ENCODE measurements at regions of chr17 and their contacts with region 1.

Region 1: DNA sequence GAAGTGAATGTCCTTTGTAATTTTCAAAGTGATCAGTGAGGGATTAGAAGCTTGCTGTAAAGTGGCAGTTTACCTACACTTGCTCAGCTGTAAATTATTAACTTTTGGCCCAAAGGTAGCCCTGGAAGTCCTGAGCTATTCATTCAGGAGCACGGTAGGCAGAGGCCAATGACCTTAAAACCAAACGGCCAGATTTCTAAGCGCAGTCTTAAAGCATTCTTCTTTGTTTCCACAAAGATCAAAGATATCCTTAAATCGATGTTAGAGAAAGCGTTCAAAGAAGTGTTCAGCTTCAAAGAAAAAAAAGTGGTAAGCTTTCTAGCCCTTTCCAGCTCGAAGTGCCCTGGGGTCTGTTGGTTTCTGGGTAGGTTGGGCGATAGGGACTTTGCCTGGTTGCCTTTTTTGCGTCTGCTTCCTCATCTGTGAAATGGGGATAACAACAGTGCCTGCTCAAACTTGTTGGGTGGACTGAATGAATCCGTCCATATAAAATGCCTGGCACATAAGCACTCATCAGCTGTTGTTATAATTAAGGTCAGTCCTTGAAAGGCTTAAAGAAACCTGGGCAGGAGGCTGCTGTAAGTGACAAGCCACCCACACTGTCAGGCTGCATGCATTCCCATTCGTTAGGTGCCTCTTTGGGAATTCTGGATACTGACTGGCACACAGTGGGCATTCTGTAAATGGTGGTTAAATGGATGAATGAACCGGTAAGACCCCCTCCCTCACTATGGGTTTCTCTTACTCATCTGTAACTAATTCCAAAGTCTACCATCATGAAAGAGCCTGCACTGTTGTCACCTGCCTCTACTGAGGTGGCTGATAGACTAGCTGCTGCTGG is 113.2 kb downstream of the PRKCA start:
- DNase-seq: no peak
- H3K4me3 ChIP-seq: no peak overlapping the region
- H3K27ac ChIP-seq: peak overlapping the region; percentile 54 to 77 (median 69)
- H3K4me1 ChIP-seq: peaks cover 11 to 44% (median 27%) of the 10 kb centered on the region in 4 donors
- H3K27me3 ChIP-seq: no peaks in the 10 kb centered on the region
- CTCF ChIP-seq: no peak
- EP300 ChIP-seq: no peak
- POLR2A ChIP-seq: no peak

Region 2: GRCh38 chr17:66337866-66338485 is 77.6 kb before region 1 on chr17:
- in situ Hi-C with region 1: no loop called
- intact Hi-C with region 1: no loop called
- DNase-seq: no peak
- H3K4me3 ChIP-seq: no peak overlapping the region
- H3K27ac ChIP-seq: no peak overlapping the region
- H3K4me1 ChIP-seq: peaks cover 0 to 5% (median 0%) of the 10 kb centered on the region in 4 donors
- H3K27me3 ChIP-seq: no peaks in the 10 kb centered on the region
- CTCF ChIP-seq: no peak
- EP300 ChIP-seq: no peak
- POLR2A ChIP-seq: no peak

Region 3: DNA sequence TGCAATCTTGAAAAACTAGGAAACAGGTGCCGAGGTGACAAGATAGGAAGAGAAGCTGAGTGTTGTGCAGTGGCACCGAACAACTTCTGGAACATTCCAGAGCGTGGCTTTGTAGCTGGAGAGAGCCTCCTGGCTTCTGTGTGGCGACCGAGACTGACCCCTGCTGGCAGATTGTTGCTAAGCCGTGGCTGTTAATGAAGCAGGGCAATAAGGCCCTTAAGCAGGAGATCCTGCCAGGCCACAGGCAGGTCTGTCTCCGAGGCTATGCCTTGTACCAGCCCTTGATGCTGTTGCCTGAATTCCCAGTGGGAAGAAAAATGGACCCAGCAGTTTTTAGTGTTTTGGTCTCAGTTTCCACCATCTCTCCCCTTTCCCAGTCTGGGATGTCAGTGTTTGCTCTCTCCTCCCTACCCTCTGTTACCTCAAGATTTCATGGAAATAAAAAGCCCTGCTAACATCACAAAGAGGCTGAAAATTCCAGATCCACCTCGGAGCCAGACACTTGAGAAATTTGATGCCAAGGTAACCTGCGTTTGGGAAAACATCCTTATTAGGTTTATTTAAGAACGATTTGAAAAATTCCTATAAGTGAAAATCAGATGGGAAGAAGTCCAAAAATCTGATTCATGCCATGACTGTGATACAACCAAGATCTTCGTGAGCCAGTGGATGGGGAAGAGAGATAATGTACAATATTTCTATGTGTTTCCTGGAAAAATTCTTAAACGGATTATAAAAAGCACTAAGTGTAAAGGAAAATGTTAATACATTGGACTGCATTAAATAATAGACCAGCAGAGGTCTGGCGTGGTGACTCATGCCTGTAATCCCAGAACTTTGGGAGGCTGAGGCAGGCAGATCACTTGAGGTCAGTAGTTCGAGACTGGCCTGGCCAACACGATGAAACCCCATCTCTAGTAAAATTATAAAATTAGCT is 151.9 kb after region 1 on chr17:
- in situ Hi-C with region 1: no loop called
- intact Hi-C with region 1: loop called (anchors 10 kb)
- DNase-seq: peak; percentile 88
- H3K4me3 ChIP-seq: no peak overlapping the region
- H3K27ac ChIP-seq: no peak overlapping the region
- H3K4me1 ChIP-seq: peaks cover 0 to 10% (median 1%) of the 10 kb centered on the region in 4 donors
- H3K27me3 ChIP-seq: no peaks in the 10 kb centered on the region
- CTCF ChIP-seq: peak; percentile 76 to 91 (median 90)
- EP300 ChIP-seq: no peak
- POLR2A ChIP-seq: no peak